WTC11 (cell line): ENCODE measurements at regions of chr19 and their contacts with region 1.

Region 1: GRCh38 chr19:42450314-42450934 is 7.7 kb upstream of the CXCL17 start:
- DNase-seq: peak; percentile 68
- ATAC-seq: peak; percentile 94
- H3K4me3 Mint-ChIP-seq: no peak overlapping the region
- H3K27ac Mint-ChIP-seq: no peak overlapping the region
- H3K4me1 Mint-ChIP-seq: peaks cover 19% of the 10 kb centered on the region
- H3K27me3 Mint-ChIP-seq: no peaks in the 10 kb centered on the region; the same call in 1 of the 2 replicates
- CTCF ChIP-seq: peak; percentile 82

Region 2: DNA sequence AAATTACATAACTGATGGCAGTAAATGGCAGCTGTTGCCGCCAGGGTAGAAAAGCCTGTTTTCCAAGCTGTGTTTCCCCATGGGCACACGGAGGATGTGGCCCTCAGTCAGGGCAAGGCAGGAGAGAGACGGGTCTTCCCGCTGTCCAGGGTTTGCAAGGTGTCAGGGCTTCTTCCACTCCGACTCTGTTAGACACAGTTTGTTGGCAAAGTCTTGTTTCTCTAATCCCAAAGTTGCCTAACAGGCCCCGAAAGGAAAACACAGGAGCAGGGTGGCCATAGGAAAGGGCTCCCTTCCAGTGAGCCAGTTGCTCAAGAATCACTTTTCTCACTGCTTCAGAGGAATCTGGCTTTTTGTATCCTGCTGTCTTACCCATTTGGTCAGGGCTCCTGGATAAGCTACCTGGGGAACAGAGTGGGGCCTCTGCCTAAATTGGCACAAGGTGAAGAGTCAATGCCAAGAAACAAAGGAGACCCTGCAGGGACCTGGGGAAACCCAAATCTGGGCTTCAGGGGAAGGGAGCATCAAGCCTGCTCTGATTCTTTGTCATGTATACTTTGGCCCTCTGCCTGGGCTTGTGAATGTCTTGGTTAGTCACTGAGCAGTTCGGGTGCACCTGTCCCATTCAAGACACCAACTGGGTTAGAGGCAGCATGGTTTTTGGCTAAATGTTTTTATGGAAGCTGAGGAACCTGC is 21.3 kb after region 1 on chr19:
- CTCF ChIA-PET with region 1: interaction called, 13 read pairs
- POLR2A ChIA-PET with region 1: no interaction called
- DNase-seq: no peak
- ATAC-seq: peak; percentile 20; the same call in 1 of the 2 replicates
- H3K4me3 Mint-ChIP-seq: no peak overlapping the region
- H3K27ac Mint-ChIP-seq: peak overlapping the region; percentile 94
- H3K4me1 Mint-ChIP-seq: peaks cover 66% of the 10 kb centered on the region
- H3K27me3 Mint-ChIP-seq: no peaks in the 10 kb centered on the region
- CTCF ChIP-seq: no peak